ENCODE measurements at regions of chr15 and their contacts with region 1.

Region 1: GRCh38 chr15:25501828-25502446 is 63.1 kb upstream of the UBE3A start:
- DNase-seq: peak in 2 of 3 donors; percentile 4 to 9
- H3K4me3 ChIP-seq: no peak overlapping the region
- H3K4me3 Mint-ChIP-seq: no peak overlapping the region
- H3K27ac ChIP-seq: no peak overlapping the region
- H3K27ac Mint-ChIP-seq: no peak overlapping the region
- H3K4me1 ChIP-seq: no peaks in the 10 kb centered on the region
- H3K4me1 Mint-ChIP-seq: no peaks in the 10 kb centered on the region
- H3K27me3 ChIP-seq: no peaks in the 10 kb centered on the region
- H3K27me3 Mint-ChIP-seq: peaks cover 0 to 1% (median 0%) of the 10 kb centered on the region in 3 donors
- CTCF ChIP-seq: peak; percentile 36

Region 2: DNA sequence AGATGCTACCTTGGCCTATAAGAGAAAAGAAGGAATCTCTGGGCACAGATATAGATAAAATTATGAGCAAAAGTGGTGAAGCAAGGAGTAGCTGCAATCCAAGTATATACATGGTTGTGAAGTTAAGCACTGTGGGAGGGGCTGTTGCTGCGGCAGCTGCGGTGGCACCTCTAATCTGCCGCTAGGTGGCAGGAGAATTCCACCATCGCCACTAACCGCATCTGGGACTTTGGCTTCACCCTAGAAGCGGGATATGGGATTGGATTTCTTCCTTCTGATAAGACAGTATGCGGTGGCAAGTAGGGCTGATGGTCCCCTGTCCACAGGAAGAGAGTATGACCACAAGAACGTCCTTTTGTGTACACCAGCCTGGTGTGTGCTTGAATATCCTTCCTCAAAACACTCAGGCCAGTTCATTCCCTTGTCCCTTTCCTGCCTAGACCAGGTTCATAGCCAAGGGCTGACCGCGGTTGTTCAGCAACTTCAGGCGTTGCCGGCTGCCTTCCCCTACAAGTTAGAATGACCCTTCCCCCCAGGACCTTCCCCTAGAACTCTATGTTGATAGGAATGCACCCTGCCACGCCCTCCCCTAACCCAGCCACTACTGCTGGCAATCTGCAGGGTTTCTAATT is 1859.4 kb before region 1 on chr15:
- intact Hi-C with region 1: loop called (anchors 5 kb)
- DNase-seq: peak; percentile 1 to 17 (median 9)
- H3K4me3 ChIP-seq: no peak overlapping the region
- H3K4me3 Mint-ChIP-seq: no peak overlapping the region
- H3K27ac ChIP-seq: no peak overlapping the region
- H3K27ac Mint-ChIP-seq: no peak overlapping the region
- H3K4me1 ChIP-seq: no peaks in the 10 kb centered on the region
- H3K4me1 Mint-ChIP-seq: no peaks in the 10 kb centered on the region
- H3K27me3 ChIP-seq: peaks cover 0 to 5% of the 10 kb centered on the region in 2 donors
- H3K27me3 Mint-ChIP-seq: peaks cover 3 to 5% (median 3%) of the 10 kb centered on the region in 3 donors
- CTCF ChIP-seq: peak; percentile 78